CD8-positive, alpha-beta T cell (primary cell): ENCODE measurements at regions of chr21 and their contacts with region 1.

Region 1: DNA sequence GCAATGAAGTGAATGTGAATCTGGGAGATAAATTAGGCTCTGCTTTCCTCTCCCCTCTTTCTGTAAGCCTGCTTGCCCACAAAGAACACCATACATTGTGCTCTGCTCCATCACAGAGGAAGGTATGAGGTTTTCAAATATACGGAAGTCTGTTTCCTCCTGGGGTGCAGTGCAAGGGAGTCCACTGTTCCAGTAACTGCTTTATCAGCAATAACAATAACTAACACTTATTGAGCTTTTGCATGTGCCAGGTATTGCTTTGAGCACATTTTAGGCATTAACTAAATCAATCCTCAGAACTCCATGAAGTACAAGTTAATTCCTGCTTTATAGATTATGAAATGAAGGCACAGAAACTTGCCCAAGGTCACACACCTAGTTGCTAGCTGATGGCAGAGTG is 10.0 kb downstream of the LTN1 start:
- DNase-seq: no peak
- ATAC-seq: no peak
- H3K4me3 ChIP-seq: no peak overlapping the region
- H3K4me3 Mint-ChIP-seq: no peak overlapping the region
- H3K27ac ChIP-seq: no peak overlapping the region
- H3K27ac Mint-ChIP-seq: peak overlapping the region; percentile 37
- H3K4me1 ChIP-seq: no peaks in the 10 kb centered on the region
- H3K4me1 Mint-ChIP-seq: peaks cover 21% of the 10 kb centered on the region
- H3K27me3 ChIP-seq: no peaks in the 10 kb centered on the region
- H3K27me3 Mint-ChIP-seq: no peaks in the 10 kb centered on the region
- CTCF ChIP-seq: no peak

Region 2: DNA sequence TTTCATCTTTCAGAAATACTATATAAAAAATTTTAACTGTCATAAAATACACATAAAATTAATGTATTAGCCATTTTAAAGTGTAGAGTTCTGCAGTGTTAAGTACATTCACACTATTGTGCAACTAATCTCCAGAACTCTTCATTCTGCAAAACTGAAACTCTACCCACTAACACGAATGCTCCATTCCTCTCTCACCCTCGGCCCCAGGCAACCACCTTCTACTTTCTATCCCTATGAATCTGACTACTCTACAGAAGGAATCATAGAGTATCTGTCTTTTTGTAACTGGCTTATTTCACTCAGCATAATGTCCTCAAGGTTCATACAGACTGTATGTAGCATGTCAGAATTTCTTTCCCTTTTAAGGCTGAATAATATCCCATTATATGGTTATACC is 33.3 kb before region 1 on chr21:
- CTCF ChIA-PET with region 1: no interaction called
- POLR2A ChIA-PET with region 1: no interaction called
- intact Hi-C with region 1: loop called in 1 of 2 experiments (anchors 5 kb)
- DNase-seq: no peak
- ATAC-seq: no peak
- H3K4me3 ChIP-seq: no peak overlapping the region
- H3K4me3 Mint-ChIP-seq: no peak overlapping the region
- H3K27ac ChIP-seq: no peak overlapping the region
- H3K27ac Mint-ChIP-seq: peak overlapping the region; percentile 15
- H3K4me1 ChIP-seq: no peaks in the 10 kb centered on the region
- H3K4me1 Mint-ChIP-seq: peaks cover 3% of the 10 kb centered on the region
- H3K27me3 ChIP-seq: no peaks in the 10 kb centered on the region
- H3K27me3 Mint-ChIP-seq: no peaks in the 10 kb centered on the region
- CTCF ChIP-seq: no peak

Region 3: DNA sequence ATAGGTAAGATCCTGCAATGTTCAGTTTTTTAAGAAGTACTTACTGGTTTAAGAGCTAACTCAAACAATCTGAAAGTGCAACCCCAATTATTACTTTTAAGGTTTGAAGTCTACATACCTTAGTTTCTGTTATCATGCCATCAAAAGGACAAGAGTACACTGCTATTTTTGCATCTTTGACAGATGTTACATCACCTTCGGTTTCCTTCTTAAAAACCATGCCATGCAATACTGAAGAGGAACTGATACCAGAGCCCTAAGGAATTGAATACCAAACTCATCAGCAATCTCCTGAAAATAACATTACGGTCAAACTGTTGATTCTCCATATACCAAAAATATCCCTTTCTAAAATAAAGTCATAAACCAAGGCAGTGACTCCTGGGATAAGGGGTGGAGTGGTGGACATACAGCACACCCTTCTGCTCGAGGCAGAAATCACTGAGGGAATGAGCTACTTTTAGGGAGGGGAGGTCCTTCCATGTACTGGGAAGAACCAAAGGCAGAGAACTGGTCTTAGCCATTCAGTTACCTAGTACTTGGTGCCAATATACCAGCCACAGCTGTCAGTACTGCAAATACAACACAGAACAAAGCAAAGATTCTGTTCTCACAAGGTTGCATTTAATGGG is 82.3 kb after region 1 on chr21:
- CTCF ChIA-PET with region 1: no interaction called
- POLR2A ChIA-PET with region 1: no interaction called
- intact Hi-C with region 1: loop called in 1 of 2 experiments (anchors 5 kb)
- DNase-seq: no peak
- ATAC-seq: no peak
- H3K4me3 ChIP-seq: no peak overlapping the region
- H3K4me3 Mint-ChIP-seq: no peak overlapping the region
- H3K27ac ChIP-seq: no peak overlapping the region
- H3K27ac Mint-ChIP-seq: peak overlapping the region; percentile 45
- H3K4me1 ChIP-seq: no peaks in the 10 kb centered on the region
- H3K4me1 Mint-ChIP-seq: peaks cover 13% of the 10 kb centered on the region
- H3K27me3 ChIP-seq: no peaks in the 10 kb centered on the region
- H3K27me3 Mint-ChIP-seq: no peaks in the 10 kb centered on the region
- CTCF ChIP-seq: no peak